ENCODE measurements at regions of chr4 and their contacts with region 1.

Region 1: GRCh38 chr4:144174401-144175067 is 34.0 kb upstream of the GYPA start:
- DNase-seq: peak in 1 of 2 experiments; percentile 34
- H3K4me3 ChIP-seq: no peak overlapping the region
- H3K4me3 Mint-ChIP-seq: no peak overlapping the region
- H3K27ac Mint-ChIP-seq: no peak overlapping the region
- H3K4me1 ChIP-seq: peaks cover 20% of the 10 kb centered on the region
- H3K4me1 Mint-ChIP-seq: peaks cover 6% of the 10 kb centered on the region
- H3K27me3 ChIP-seq: no peaks in the 10 kb centered on the region
- H3K27me3 Mint-ChIP-seq: no peaks in the 10 kb centered on the region
- CTCF ChIP-seq: peak in 1 of 2 experiments; percentile 17

Region 2: GRCh38 chr4:143882892-143883291 is 291.6 kb before region 1 on chr4:
- CTCF ChIA-PET with region 1: no interaction called
- POLR2A ChIA-PET with region 1: no interaction called
- intact Hi-C with region 1: no loop called
- DNase-seq: no peak
- H3K4me3 ChIP-seq: no peak overlapping the region
- H3K4me3 Mint-ChIP-seq: no peak overlapping the region
- H3K27ac Mint-ChIP-seq: no peak overlapping the region
- H3K4me1 ChIP-seq: peaks cover 3% of the 10 kb centered on the region; the same call in 1 of the 2 replicates
- H3K4me1 Mint-ChIP-seq: no peaks in the 10 kb centered on the region
- H3K27me3 ChIP-seq: no peaks in the 10 kb centered on the region
- H3K27me3 Mint-ChIP-seq: no peaks in the 10 kb centered on the region
- CTCF ChIP-seq: no peak

Region 3: GRCh38 chr4:144213371-144213770 is 38.8 kb after region 1 on chr4:
- CTCF ChIA-PET with region 1: no interaction called
- POLR2A ChIA-PET with region 1: no interaction called
- intact Hi-C with region 1: no loop called
- DNase-seq: no peak
- H3K4me3 ChIP-seq: no peak overlapping the region
- H3K4me3 Mint-ChIP-seq: no peak overlapping the region
- H3K27ac Mint-ChIP-seq: no peak overlapping the region
- H3K4me1 ChIP-seq: no peaks in the 10 kb centered on the region
- H3K4me1 Mint-ChIP-seq: no peaks in the 10 kb centered on the region
- H3K27me3 ChIP-seq: no peaks in the 10 kb centered on the region
- H3K27me3 Mint-ChIP-seq: no peaks in the 10 kb centered on the region
- CTCF ChIP-seq: no peak

Region 4: GRCh38 chr4:144223661-144224060 is 49.1 kb after region 1 on chr4:
- CTCF ChIA-PET with region 1: no interaction called
- POLR2A ChIA-PET with region 1: no interaction called
- intact Hi-C with region 1: no loop called
- DNase-seq: no peak
- H3K4me3 ChIP-seq: no peak overlapping the region
- H3K4me3 Mint-ChIP-seq: no peak overlapping the region
- H3K27ac Mint-ChIP-seq: no peak overlapping the region
- H3K4me1 ChIP-seq: no peaks in the 10 kb centered on the region
- H3K4me1 Mint-ChIP-seq: no peaks in the 10 kb centered on the region
- H3K27me3 ChIP-seq: no peaks in the 10 kb centered on the region
- H3K27me3 Mint-ChIP-seq: no peaks in the 10 kb centered on the region
- CTCF ChIP-seq: no peak

Region 5: DNA sequence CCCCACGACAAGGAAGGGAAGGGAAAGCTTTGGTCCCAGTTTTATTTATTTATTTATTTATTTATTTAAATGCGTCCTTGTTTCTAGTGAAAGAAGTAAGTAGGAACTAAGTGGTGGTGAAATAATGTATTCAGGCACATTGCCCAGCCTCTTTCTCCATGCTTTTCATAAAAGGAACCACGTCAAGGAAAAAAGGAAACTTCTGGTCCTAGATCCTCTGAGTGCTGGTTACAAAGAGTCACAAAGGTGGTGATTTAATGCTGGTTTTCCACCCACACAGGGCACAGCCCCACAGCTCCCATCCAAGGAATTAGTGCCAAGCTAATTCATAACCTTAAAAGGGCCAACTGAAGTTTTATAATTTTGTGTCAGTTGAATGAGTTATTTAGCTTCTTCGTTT is 172.6 kb after region 1 on chr4:
- CTCF ChIA-PET with region 1: no interaction called
- POLR2A ChIA-PET with region 1: no interaction called
- intact Hi-C with region 1: no loop called
- DNase-seq: no peak
- H3K4me3 ChIP-seq: no peak overlapping the region
- H3K4me3 Mint-ChIP-seq: no peak overlapping the region
- H3K27ac Mint-ChIP-seq: no peak overlapping the region
- H3K4me1 ChIP-seq: no peaks in the 10 kb centered on the region
- H3K4me1 Mint-ChIP-seq: no peaks in the 10 kb centered on the region
- H3K27me3 ChIP-seq: no peaks in the 10 kb centered on the region
- H3K27me3 Mint-ChIP-seq: no peaks in the 10 kb centered on the region
- CTCF ChIP-seq: no peak

Region 6: DNA sequence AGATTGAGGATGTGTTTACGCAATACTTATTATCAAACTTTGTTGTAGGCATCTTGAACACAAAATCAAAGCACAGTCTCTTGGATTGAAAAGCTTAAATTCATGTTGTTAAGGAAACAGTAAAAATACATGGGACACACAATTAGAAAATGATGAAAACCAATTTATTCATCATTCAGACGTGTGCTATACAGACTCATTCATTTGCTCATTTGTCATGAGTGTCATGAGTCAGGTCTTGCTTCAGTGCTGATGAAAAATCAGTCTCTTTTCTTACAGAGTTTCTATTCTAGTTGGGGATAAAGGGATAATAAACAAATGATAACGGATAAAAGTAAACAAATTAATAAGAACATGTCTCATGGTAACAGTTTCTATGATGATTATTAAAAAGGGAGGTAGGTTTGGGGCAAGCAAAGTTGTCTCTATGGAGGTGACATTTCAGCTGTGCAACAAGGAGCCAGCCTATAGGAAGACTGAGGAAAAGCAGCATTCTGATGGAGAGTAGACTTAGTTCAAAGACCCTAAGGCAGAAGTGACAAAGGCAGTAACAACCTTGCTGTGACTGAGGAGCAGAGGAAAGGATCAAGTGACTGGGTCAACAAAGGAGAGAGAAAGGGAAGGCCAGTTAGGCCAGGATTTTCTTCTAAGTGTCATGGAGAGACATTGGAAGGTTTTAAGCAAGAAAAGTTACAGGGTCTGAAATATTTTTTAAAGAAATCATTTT is 247.5 kb after region 1 on chr4:
- CTCF ChIA-PET with region 1: no interaction called
- POLR2A ChIA-PET with region 1: no interaction called
- intact Hi-C with region 1: loop called (anchors 10 kb)
- DNase-seq: no peak
- H3K4me3 ChIP-seq: no peak overlapping the region
- H3K4me3 Mint-ChIP-seq: no peak overlapping the region
- H3K27ac Mint-ChIP-seq: no peak overlapping the region
- H3K4me1 ChIP-seq: no peaks in the 10 kb centered on the region
- H3K4me1 Mint-ChIP-seq: no peaks in the 10 kb centered on the region
- H3K27me3 ChIP-seq: no peaks in the 10 kb centered on the region
- H3K27me3 Mint-ChIP-seq: no peaks in the 10 kb centered on the region
- CTCF ChIP-seq: no peak

Region 7: GRCh38 chr4:144754562-144755410 is 580.3 kb after region 1 on chr4:
- CTCF ChIA-PET with region 1: no interaction called
- POLR2A ChIA-PET with region 1: no interaction called
- intact Hi-C with region 1: loop called (anchors 1 kb)
- DNase-seq: no peak
- H3K4me3 ChIP-seq: no peak overlapping the region
- H3K4me3 Mint-ChIP-seq: no peak overlapping the region
- H3K27ac Mint-ChIP-seq: no peak overlapping the region
- H3K4me1 ChIP-seq: no peaks in the 10 kb centered on the region
- H3K4me1 Mint-ChIP-seq: no peaks in the 10 kb centered on the region
- H3K27me3 ChIP-seq: no peaks in the 10 kb centered on the region
- H3K27me3 Mint-ChIP-seq: no peaks in the 10 kb centered on the region
- CTCF ChIP-seq: no peak

Region 8: GRCh38 chr4:145061318-145061920 is 886.9 kb after region 1 on chr4:
- CTCF ChIA-PET with region 1: no interaction called
- POLR2A ChIA-PET with region 1: no interaction called
- intact Hi-C with region 1: loop called (anchors 2 kb)
- DNase-seq: peak in 1 of 2 experiments; percentile 15
- H3K4me3 ChIP-seq: no peak overlapping the region
- H3K4me3 Mint-ChIP-seq: no peak overlapping the region
- H3K27ac Mint-ChIP-seq: no peak overlapping the region
- H3K4me1 ChIP-seq: peaks cover 6% of the 10 kb centered on the region
- H3K4me1 Mint-ChIP-seq: peaks cover 5% of the 10 kb centered on the region
- H3K27me3 ChIP-seq: no peaks in the 10 kb centered on the region
- H3K27me3 Mint-ChIP-seq: no peaks in the 10 kb centered on the region
- CTCF ChIP-seq: peak; percentile 5 to 22

Region 9: GRCh38 chr4:145618932-145619638 is 1444.6 kb after region 1 on chr4 and contains the start of gene MMAA:
- CTCF ChIA-PET with region 1: no interaction called
- POLR2A ChIA-PET with region 1: no interaction called
- intact Hi-C with region 1: loop called (anchors 5 kb)
- DNase-seq: peak; percentile 95 to 96
- H3K4me3 ChIP-seq: peak within 1 kb of the TSS; percentile 67
- H3K4me3 Mint-ChIP-seq: peak within 1 kb of the TSS; percentile 94
- H3K27ac Mint-ChIP-seq: peak within 1 kb of the TSS; percentile 97
- H3K4me1 ChIP-seq: peaks cover 14% of the 10 kb centered on the region; the same call in 1 of the 2 replicates
- H3K4me1 Mint-ChIP-seq: no peaks in the 10 kb centered on the region
- H3K27me3 ChIP-seq: no peaks in the 10 kb centered on the region
- H3K27me3 Mint-ChIP-seq: peaks cover 2% of the 10 kb centered on the region
- CTCF ChIP-seq: peak; percentile 44 to 54
- total RNA-seq, gene MMAA: 1.7 and 3.3 TPM in 2 replicates